B cell (primary cell): ENCODE measurements at regions of chr3 and their contacts with region 1.

Region 1: DNA sequence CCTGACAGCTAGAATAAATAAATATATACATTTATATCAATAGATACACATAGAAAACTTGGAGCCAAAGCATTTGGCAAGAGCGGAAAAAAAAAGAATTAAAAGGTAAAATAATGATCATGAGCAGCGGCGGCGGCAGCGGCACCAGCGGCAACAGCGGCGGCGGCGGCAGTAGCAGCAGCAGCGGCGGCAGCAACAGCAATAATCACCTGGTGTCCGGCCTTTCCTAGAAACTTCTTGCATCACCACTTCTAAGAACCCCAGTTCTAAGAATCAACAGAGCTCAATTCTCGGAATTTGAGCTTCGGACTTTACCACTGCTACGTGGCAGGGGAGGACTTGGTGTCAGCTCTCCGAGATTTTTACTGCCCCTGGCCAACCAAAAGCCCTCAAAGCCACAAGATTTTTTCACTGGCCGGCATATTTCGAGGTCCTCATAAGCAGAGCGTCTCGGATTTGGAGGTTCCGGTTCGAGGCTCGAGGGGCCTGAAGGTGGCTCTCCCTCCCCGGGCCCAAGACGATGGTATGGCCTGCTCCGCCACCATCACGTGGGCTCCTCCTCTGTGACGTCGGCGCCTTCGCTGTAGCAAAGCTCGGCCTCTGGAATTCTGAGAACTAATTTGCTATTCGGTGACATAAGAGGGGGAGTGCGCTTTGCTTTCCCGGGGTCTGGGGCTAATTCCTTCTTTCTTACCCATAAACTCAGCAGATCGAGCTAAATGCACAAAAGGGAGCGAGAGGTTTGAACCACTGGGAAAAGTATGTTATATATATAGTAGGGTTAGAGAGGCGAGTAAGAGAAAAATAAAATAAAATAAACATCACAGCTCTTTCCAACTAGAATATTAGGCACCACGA is at the start of gene BCL6:
- DNase-seq: peak; percentile 97
- ATAC-seq: peak; percentile 60
- H3K4me3 ChIP-seq: peak within 1 kb of the TSS; percentile 67 to 96 (median 84)
- H3K4me3 Mint-ChIP-seq: peak within 1 kb of the TSS; percentile 97
- H3K27ac ChIP-seq: peak within 1 kb of the TSS; percentile 88 to 96
- H3K27ac Mint-ChIP-seq: peak within 1 kb of the TSS; percentile 96
- H3K4me1 ChIP-seq: peaks cover 38 to 52% of the 10 kb centered on the region in 2 donors
- H3K4me1 Mint-ChIP-seq: peaks cover 74% of the 10 kb centered on the region
- H3K27me3 ChIP-seq: no peaks in the 10 kb centered on the region
- H3K27me3 Mint-ChIP-seq: no peaks in the 10 kb centered on the region
- CTCF ChIP-seq: no peak
- total RNA-seq, gene BCL6: 48.2 and 55.5 TPM in 2 replicates

Region 2: DNA sequence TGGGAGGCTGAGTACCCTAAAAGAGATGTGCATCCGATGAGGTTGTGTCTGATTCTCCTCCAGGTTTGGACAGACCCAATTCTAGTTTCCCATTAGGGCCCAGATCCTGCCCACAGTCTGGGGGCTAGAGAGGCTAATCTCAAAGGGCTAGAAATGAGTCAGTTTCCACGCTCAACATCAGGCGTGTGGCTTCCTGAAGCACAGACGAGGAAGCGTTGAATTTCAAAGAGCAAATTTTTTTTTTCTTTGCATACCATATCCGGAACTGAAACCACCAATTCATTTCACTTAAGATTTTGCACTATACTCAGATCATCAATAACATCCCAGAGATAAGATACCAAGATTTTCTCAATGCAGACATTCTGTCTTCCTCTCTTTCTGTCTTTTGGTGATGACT is 173.6 kb after region 1 on chr3:
- CTCF ChIA-PET with region 1: interaction called, 10 read pairs
- POLR2A ChIA-PET with region 1: no interaction called
- intact Hi-C with region 1: loop called (anchors 1 kb)
- DNase-seq: peak; percentile 77
- ATAC-seq: peak; percentile 86
- H3K4me3 ChIP-seq: peak overlapping the region; percentile 11 to 62 (median 44)
- H3K4me3 Mint-ChIP-seq: peak overlapping the region; percentile 90
- H3K27ac ChIP-seq: peak overlapping the region; percentile 45 to 61
- H3K27ac Mint-ChIP-seq: peak overlapping the region; percentile 87
- H3K4me1 ChIP-seq: peaks cover 20 to 22% of the 10 kb centered on the region in 2 donors
- H3K4me1 Mint-ChIP-seq: peaks cover 31% of the 10 kb centered on the region
- H3K27me3 ChIP-seq: peaks cover 0 to 9% (median 2%) of the 10 kb centered on the region in 4 experiments
- H3K27me3 Mint-ChIP-seq: peaks cover 51% of the 10 kb centered on the region
- CTCF ChIP-seq: no peak

Region 3: DNA sequence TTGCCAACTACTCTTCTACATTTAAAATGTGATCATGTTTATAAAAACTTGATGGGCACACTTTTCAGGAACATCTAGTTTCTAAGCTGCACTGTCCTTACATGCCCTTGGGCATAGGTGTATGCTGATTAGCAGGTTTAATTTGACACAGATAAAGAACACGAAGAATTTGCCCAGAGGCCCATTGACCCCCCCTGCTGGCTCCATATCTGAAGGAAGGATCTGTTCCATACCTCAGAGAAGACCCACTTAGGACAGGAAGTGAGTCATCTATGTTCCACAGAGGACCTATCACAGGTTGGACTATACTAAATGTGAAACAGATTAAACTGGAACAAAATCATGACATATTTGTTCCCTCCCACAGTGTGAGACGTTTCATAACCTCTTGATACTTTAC is 315.7 kb after region 1 on chr3:
- CTCF ChIA-PET with region 1: interaction called, 14 read pairs
- POLR2A ChIA-PET with region 1: no interaction called
- intact Hi-C with region 1: loop called (anchors 2 kb)
- DNase-seq: peak; percentile 46
- ATAC-seq: peak; percentile 87
- H3K4me3 ChIP-seq: no peak overlapping the region
- H3K4me3 Mint-ChIP-seq: no peak overlapping the region
- H3K27ac ChIP-seq: no peak overlapping the region
- H3K27ac Mint-ChIP-seq: no peak overlapping the region
- H3K4me1 ChIP-seq: no peaks in the 10 kb centered on the region
- H3K4me1 Mint-ChIP-seq: peaks cover 3% of the 10 kb centered on the region
- H3K27me3 ChIP-seq: no peaks in the 10 kb centered on the region
- H3K27me3 Mint-ChIP-seq: no peaks in the 10 kb centered on the region
- CTCF ChIP-seq: no peak

Region 4: DNA sequence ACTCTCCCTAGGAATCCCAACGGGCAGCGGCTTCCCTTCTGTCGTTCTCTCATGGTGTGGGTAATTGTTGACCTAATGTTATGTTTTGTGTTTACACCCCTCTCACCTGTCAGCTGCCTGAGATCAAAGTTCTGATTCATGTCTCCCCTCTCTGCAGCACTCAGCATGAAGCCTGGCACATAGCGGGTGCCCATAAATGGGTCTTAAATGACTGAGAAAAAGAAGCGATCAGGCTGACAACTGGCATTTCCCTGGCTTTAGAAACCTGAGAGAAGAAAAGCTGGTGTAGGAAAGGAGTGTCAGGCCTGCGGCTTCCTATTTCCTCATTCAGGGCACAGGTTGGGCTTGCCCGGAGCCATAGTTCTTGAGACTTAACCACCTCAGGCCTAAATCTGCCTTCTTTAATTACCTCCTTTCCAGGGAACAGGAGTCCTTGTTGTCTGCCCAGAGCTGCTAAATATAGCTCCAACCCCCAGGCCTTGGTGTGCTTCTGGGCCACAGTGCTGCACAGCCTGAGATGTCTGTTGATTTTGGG is 440.4 kb after region 1 on chr3:
- CTCF ChIA-PET with region 1: interaction called, 3 read pairs
- POLR2A ChIA-PET with region 1: no interaction called
- intact Hi-C with region 1: loop called (anchors 10 kb)
- DNase-seq: peak; percentile 45
- ATAC-seq: peak; percentile 34
- H3K4me3 ChIP-seq: no peak overlapping the region
- H3K4me3 Mint-ChIP-seq: peak overlapping the region; percentile 8
- H3K27ac ChIP-seq: peak overlapping the region in 1 of 2 donors; percentile 72
- H3K27ac Mint-ChIP-seq: peak overlapping the region; percentile 74
- H3K4me1 ChIP-seq: peaks cover 23% of the 10 kb centered on the region in 2 donors
- H3K4me1 Mint-ChIP-seq: peaks cover 44% of the 10 kb centered on the region
- H3K27me3 ChIP-seq: no peaks in the 10 kb centered on the region
- H3K27me3 Mint-ChIP-seq: no peaks in the 10 kb centered on the region
- CTCF ChIP-seq: no peak

Region 5: DNA sequence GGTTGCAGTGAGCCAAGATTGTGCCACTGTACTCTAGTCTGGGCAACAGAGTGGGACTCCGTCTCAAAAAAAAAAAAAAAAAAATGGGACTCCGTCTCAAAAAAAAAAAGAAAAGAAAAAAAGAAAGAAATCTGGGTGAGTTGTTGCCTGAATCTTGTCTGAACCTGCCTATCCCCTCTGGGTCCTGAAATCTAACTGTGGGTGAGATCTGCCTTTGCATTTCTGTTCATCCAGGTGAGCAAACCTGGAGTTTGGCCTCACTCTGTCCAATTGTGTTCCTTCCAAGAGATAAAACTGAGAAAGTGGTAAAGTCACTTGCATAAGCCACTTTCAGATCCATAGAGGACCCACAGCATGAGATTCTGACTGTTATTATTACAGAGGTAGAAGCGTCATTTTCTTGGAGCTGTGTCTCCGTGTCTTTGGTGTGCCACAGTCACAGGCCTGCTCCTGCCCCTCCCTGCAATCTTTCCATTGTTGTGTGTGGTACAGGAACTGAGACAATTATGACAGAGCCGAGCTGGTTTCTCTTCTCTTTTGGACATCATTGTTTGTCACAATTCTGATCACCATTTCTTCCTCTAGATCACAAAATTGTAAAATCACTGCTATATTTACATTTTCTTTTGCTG is 644.4 kb after region 1 on chr3:
- CTCF ChIA-PET with region 1: interaction called, 12 read pairs
- POLR2A ChIA-PET with region 1: interaction called, 3 read pairs
- intact Hi-C with region 1: loop called (anchors 2 kb)
- DNase-seq: peak; percentile 86
- ATAC-seq: peak; percentile 88
- H3K4me3 ChIP-seq: peak overlapping the region in 1 of 5 experiments; percentile 42
- H3K4me3 Mint-ChIP-seq: peak overlapping the region; percentile 82
- H3K27ac ChIP-seq: peak overlapping the region; percentile 94 to 96
- H3K27ac Mint-ChIP-seq: peak overlapping the region; percentile 99
- H3K4me1 ChIP-seq: peaks cover 55 to 75% of the 10 kb centered on the region in 2 donors
- H3K4me1 Mint-ChIP-seq: peaks cover 80% of the 10 kb centered on the region
- H3K27me3 ChIP-seq: no peaks in the 10 kb centered on the region
- H3K27me3 Mint-ChIP-seq: no peaks in the 10 kb centered on the region
- CTCF ChIP-seq: no peak

Region 6: DNA sequence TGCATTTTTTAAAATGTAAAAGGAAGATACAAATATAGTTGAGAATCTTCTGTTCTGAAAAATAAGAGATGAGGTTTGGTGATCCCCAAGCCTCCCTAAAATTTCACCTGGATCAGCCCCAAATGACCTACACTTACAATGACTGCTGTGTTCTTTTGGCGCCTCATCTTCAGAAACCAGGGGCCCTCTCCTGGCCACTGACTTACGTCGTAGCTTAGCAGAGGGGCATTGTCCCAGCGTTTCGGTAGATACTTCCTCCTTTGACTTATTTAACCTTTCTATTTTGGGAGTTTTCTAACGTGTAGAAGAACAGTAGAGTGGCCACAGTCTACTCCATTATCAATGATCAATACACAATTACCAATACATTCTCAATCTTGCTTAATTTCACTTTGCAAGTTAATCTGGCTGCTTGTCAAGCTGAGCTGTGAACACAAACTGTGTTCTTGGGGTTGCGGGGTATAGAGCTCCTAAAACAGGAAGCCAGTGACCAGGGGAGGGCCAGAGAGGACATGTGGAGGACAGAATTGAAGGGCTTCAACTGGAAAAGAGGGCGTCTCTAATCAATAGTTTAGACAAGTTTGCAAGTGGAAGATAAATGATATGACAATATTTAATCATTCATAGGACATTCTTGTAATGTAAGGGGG is 828.0 kb after region 1 on chr3:
- CTCF ChIA-PET with region 1: interaction called, 46 read pairs
- POLR2A ChIA-PET with region 1: no interaction called
- intact Hi-C with region 1: loop called (anchors 2 kb)
- DNase-seq: peak; percentile 59
- ATAC-seq: peak; percentile 62
- H3K4me3 ChIP-seq: no peak overlapping the region
- H3K4me3 Mint-ChIP-seq: peak overlapping the region; percentile 52
- H3K27ac ChIP-seq: no peak overlapping the region
- H3K27ac Mint-ChIP-seq: peak overlapping the region; percentile 57
- H3K4me1 ChIP-seq: peaks cover 11 to 20% of the 10 kb centered on the region in 2 donors
- H3K4me1 Mint-ChIP-seq: peaks cover 26% of the 10 kb centered on the region
- H3K27me3 ChIP-seq: no peaks in the 10 kb centered on the region
- H3K27me3 Mint-ChIP-seq: no peaks in the 10 kb centered on the region
- CTCF ChIP-seq: peak; percentile 22

Region 7: DNA sequence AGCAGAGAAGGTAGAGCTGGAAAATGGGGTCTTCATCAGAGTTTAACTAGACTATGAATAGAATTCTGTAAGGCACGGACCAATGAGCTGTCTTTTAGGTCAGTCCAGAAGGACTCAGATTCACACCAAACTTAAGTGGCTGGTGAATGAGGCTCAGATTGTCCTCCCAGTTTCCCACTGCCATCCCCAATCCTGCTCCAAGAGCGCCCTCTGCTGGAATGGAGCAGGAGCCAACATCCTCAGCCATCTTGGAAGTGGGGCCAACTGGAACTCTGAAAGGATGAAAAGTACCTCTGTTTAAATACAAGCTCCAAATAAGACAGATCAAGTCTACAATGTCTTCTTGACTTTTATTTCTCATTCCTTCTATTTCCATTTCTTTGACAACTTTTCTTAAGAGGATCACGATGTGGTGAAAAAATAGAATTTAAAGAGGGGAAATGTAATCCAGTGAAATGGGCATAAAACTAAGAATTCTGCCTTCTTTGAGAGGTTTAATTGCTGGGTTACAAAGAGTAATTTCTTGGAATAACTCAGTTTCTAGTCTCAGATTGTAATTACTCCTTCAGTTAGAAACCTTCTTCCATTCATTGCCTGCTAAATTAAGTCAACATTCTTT is 1209.3 kb after region 1 on chr3:
- CTCF ChIA-PET with region 1: interaction called, 1,008 read pairs
- POLR2A ChIA-PET with region 1: interaction called, 16 read pairs
- intact Hi-C with region 1: loop called (anchors 1 kb)
- DNase-seq: peak; percentile 82
- ATAC-seq: peak; percentile 83
- H3K4me3 ChIP-seq: no peak overlapping the region
- H3K4me3 Mint-ChIP-seq: no peak overlapping the region
- H3K27ac ChIP-seq: no peak overlapping the region
- H3K27ac Mint-ChIP-seq: no peak overlapping the region
- H3K4me1 ChIP-seq: no peaks in the 10 kb centered on the region
- H3K4me1 Mint-ChIP-seq: peaks cover 3% of the 10 kb centered on the region
- H3K27me3 ChIP-seq: no peaks in the 10 kb centered on the region
- H3K27me3 Mint-ChIP-seq: no peaks in the 10 kb centered on the region
- CTCF ChIP-seq: peak; percentile 88